ENCODE measurements at regions of chr3 and their contacts with region 1.

Region 1: DNA sequence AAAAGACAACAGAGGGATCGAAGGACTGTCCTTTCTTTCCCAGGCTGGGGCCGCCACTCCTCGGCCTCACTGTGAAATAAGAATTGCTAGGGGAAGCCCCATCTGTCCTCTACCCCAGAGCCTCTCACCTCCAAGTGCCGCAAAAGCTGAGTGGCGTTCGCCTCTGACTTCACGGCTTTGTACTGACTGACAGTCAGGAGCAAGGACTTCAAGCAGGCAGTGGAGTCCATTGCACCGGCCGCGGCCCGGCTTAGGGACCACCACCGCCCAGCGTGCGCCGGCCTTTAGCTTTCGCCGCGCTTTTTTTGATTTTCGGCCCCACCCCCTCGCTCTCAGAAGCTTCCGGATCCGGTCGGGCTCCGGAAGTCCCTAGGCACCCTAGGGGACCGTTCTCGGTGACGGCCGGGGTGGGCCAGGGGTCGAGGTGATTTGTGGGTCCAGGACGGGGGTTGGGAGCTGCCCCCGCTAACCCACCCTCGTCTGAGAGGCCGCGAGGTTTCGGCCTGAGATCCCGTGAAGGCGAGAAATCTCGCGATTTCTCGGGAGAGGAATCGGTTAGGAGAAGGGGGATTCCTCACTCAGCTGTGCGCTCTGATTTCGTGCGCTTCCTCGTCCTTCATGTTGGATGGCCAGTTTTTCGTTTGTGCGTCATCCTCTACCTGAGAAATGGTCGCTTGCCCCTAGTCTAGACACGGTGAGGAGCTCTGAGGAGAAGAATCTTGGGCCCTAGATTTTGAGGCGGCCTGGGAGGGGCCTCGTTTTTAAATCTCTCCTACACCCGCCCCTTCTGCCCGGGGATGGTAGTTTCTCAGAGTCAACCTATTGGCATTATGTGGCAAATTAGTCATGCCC is at the starts of genes CIP2A and DZIP3:
- DNase-seq: peak; percentile 95
- H3K4me3 Mint-ChIP-seq: peak within 1 kb of the TSS; percentile 97
- H3K27ac Mint-ChIP-seq: peak within 1 kb of the TSS; percentile 98
- H3K4me1 Mint-ChIP-seq: peaks cover 45% of the 10 kb centered on the region
- H3K27me3 Mint-ChIP-seq: no peaks in the 10 kb centered on the region
- total RNA-seq, gene CIP2A: 48.3 and 58.3 TPM in 2 replicates
- total RNA-seq, gene DZIP3: 4.1 and 4.7 TPM in 2 replicates

Region 2: DNA sequence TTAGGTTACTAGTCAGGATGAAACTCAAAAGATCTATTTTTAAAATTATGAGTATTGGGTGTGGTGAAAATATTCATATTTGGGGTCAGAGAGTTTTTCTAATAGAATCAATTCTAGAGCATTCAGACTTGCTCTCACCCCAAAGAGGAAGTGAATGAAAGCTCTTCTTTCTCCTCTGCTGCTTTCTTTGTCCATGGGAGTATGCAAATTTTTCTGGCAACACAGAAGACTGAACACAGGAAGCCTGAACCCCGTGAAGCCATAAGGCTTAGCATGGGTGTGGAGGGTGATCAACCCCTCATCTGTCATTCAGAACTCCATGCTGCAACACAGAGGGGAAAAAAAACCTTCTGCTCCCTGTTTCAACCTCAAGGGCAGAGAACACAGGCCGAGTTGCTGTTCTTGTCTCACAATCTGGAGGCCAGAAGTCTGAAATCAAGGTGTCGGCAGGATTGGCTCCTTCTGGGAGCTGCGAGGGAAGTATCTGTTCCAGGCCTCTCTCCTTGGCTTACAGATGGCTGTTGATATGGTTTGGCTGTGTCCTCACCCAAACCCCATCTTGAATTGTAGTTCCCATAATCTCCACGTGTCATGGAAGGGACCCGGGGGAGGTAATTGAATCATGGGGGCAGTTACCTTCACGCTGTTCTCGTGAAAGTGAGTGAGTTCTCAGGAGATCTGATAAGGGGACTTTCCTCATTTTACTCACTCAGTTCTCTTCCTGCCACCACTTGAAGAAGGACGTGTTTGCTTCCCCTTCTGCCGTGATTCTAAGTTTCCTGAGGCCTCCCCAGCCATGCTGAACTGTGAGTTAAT is 464.8 kb before region 1 on chr3:
- intact Hi-C with region 1: loop called (anchors 1 kb)
- DNase-seq: peak; percentile 91
- H3K4me3 Mint-ChIP-seq: peak overlapping the region; percentile 96
- H3K27ac Mint-ChIP-seq: peak overlapping the region; percentile 99
- H3K4me1 Mint-ChIP-seq: peaks cover 53% of the 10 kb centered on the region
- H3K27me3 Mint-ChIP-seq: no peaks in the 10 kb centered on the region

Region 3: GRCh38 chr3:108578064-108578463 is 11.3 kb before region 1 on chr3:
- intact Hi-C with region 1: loop called (anchors 1 kb)
- DNase-seq: no peak
- H3K4me3 Mint-ChIP-seq: no peak overlapping the region
- H3K27ac Mint-ChIP-seq: no peak overlapping the region
- H3K4me1 Mint-ChIP-seq: peaks cover 7% of the 10 kb centered on the region
- H3K27me3 Mint-ChIP-seq: no peaks in the 10 kb centered on the region

Region 4: GRCh38 chr3:108602249-108602934 is 13.0 kb after region 1 on chr3:
- intact Hi-C with region 1: loop called (anchors 1 kb)
- DNase-seq: peak; percentile 84
- H3K4me3 Mint-ChIP-seq: peak overlapping the region; percentile 69
- H3K27ac Mint-ChIP-seq: peak overlapping the region; percentile 77
- H3K4me1 Mint-ChIP-seq: peaks cover 38% of the 10 kb centered on the region
- H3K27me3 Mint-ChIP-seq: no peaks in the 10 kb centered on the region

Region 5: GRCh38 chr3:108835101-108835500 is 245.7 kb after region 1 on chr3:
- intact Hi-C with region 1: loop called (anchors 1 kb)
- DNase-seq: peak; percentile 86
- H3K4me3 Mint-ChIP-seq: peak overlapping the region; percentile 90
- H3K27ac Mint-ChIP-seq: peak overlapping the region; percentile 98
- H3K4me1 Mint-ChIP-seq: peaks cover 70% of the 10 kb centered on the region
- H3K27me3 Mint-ChIP-seq: no peaks in the 10 kb centered on the region

Region 6: GRCh38 chr3:110021659-110022058 is 1432.3 kb after region 1 on chr3:
- intact Hi-C with region 1: no loop called
- DNase-seq: no peak
- H3K4me3 Mint-ChIP-seq: no peak overlapping the region
- H3K27ac Mint-ChIP-seq: no peak overlapping the region
- H3K4me1 Mint-ChIP-seq: no peaks in the 10 kb centered on the region
- H3K27me3 Mint-ChIP-seq: no peaks in the 10 kb centered on the region

Measured in activated CD4-positive, alpha-beta T cell treated with anti-CD3 and anti-CD28 coated beads, Interleukin-2, amount 10 ng/mL, durations not matched to agents 24 days and 14 days (primary cell).